ENCODE measurements at regions of chr3 and their contacts with region 1.

Region 1: DNA sequence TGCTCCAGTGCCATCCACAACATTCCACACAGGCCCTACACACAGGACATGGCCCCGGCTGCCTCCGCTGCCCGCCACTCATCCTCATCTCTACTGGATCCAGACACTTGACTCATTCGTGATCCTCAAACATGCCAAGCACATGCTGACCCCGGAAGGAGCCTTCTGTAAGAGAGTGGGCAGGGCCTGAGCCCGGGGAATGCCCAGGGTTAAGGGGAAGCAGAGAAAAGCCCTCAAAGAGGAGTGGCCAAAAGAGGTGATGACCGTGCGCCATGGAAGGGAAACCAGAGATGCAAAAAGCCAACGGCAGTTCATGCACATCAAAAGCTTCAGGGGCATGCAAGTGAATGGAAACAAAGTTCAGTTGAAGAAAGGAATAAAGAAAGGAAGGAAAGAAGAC is 46.1 kb downstream of the RFTN1 start:
- DNase-seq: no peak
- H3K4me3 ChIP-seq: no peak overlapping the region
- H3K27ac ChIP-seq: no peak overlapping the region
- H3K4me1 ChIP-seq: peaks cover 22% of the 10 kb centered on the region
- H3K27me3 ChIP-seq: no peaks in the 10 kb centered on the region
- CTCF ChIP-seq: no peak
- POLR2A ChIP-seq: no peak

Region 2: DNA sequence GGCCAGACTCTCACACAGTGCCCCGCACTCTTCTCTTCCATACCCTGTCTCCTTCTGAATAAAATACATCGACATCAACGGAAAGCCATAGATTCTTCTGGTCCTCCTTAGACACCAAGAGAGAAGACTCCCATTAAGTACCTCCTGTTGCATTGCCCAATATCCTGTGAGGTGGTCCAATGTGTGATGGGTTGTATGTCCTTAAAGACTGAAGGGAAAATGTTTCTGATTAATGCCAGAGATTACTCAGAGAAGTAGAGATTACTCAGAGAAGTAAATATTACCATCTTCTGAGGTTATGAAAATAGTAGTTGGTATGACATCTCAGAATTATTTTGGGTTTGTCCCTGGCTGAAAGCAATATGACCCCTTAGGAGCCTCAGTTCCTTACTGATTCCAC is 353.7 kb before region 1 on chr3:
- CTCF ChIA-PET with region 1: no interaction called
- POLR2A ChIA-PET with region 1: no interaction called
- dilution Hi-C with region 1: no loop called
- intact Hi-C with region 1: no loop called
- DNase-seq: no peak
- H3K4me3 ChIP-seq: no peak overlapping the region
- H3K27ac ChIP-seq: no peak overlapping the region
- H3K4me1 ChIP-seq: peaks cover 12% of the 10 kb centered on the region
- H3K27me3 ChIP-seq: no peaks in the 10 kb centered on the region
- CTCF ChIP-seq: no peak
- POLR2A ChIP-seq: no peak

Region 3: DNA sequence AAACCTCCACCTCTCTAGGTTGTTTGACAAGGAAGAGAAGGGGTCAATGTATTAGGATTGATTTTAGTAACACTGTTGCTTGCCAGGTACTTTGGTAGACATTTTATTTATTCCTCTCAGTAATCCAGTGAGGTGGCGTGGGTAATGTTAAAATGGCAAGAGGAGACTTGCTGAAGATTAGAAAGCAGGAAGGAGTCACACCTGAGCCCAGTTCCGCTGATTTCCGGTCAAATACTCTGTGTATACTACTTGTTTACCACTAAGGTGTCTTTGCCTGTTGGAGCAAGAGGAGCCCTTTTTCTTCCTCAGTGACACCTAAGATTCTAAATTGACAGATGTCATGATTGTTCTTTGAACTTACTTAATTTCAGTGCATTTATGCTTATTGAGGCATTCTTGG is 200.7 kb before region 1 on chr3:
- CTCF ChIA-PET with region 1: no interaction called
- POLR2A ChIA-PET with region 1: no interaction called
- dilution Hi-C with region 1: no loop called
- intact Hi-C with region 1: no loop called
- DNase-seq: no peak
- H3K4me3 ChIP-seq: no peak overlapping the region
- H3K27ac ChIP-seq: no peak overlapping the region
- H3K4me1 ChIP-seq: peaks cover 23% of the 10 kb centered on the region
- H3K27me3 ChIP-seq: no peaks in the 10 kb centered on the region
- CTCF ChIP-seq: no peak
- POLR2A ChIP-seq: no peak

Region 4: DNA sequence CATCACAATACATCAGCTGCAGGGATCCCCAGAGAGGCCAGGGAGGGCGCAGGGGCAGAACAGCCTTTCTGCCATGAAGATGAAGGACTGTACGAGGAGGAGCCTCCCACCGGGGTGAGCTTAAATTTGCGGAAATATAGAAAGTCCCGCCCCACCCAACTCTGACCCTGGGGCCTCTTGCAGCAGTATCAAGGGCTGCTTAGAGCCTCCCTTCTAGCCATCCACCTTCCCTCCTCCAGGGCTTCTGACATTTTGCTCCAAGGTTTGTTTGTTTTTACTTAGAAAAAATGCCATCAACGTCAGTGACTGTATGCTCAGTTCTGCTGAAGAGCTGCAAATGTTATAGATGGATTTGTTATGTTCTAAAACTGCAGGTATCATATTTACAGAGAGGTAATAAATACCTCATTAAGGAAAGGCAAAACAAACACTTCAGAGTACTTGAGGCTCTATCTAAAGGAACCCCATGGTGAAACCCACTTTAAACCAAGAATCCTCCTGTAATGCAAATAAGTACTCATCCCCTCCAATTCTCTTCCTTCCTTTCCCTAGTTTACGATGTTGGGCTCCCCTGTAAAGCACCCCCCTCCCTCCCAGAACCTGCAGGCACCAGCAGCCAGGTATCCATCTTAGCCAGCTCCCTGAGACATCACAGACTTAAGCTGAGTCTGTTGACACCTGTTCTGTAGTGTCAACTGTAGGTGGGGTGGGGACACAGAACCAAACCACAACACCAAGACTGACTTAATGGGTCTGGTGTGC is 15.6 kb after region 1 on chr3:
- CTCF ChIA-PET with region 1: interaction called, 10 read pairs
- POLR2A ChIA-PET with region 1: interaction called, 6 read pairs
- dilution Hi-C with region 1: no loop called
- intact Hi-C with region 1: loop called (anchors 1 kb)
- DNase-seq: no peak
- H3K4me3 ChIP-seq: no peak overlapping the region
- H3K27ac ChIP-seq: no peak overlapping the region
- H3K4me1 ChIP-seq: peaks cover 64% of the 10 kb centered on the region
- H3K27me3 ChIP-seq: no peaks in the 10 kb centered on the region
- CTCF ChIP-seq: no peak
- POLR2A ChIP-seq: no peak

Region 5: DNA sequence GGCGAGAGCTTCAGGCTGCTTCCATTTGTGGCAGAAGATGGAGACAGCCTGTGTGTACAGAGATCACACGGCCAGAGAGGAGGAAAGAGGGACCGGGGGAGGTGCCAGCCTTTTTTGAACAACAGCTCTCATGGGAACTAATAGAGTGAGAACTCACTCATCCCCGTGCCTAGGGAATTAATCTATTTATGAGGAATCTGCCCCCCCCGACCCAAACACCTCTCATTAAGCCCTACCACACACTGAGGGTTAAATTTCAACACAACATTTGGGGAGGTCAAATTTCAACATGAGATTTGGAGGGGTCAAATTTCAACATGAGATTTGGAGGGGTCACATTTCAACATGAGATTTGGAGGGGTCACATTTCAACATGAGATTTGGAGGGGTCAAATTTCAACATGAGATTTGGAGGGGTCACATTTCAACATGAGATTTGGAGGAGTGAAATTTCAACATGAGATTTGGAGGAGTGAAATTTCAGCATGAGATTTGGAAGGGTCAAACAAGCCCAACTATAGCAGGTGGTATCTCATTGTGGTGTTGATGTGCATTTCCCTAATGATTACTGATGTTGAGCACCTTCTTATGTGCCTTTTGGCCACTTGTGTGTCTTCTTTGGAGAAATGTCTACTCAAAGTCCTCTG is 66.7 kb after region 1 on chr3:
- CTCF ChIA-PET with region 1: no interaction called
- POLR2A ChIA-PET with region 1: no interaction called
- dilution Hi-C with region 1: no loop called
- intact Hi-C with region 1: no loop called
- DNase-seq: no peak
- H3K4me3 ChIP-seq: no peak overlapping the region
- H3K27ac ChIP-seq: no peak overlapping the region
- H3K4me1 ChIP-seq: no peaks in the 10 kb centered on the region
- H3K27me3 ChIP-seq: peaks cover 16 to 25% of the 10 kb centered on the region in 2 experiments
- CTCF ChIP-seq: no peak
- POLR2A ChIP-seq: no peak